B cell (primary cell): ENCODE measurements at regions of chr5 and their contacts with region 1.

Region 1: GRCh38 chr5:138035605-138036537 is 3.0 kb upstream of the FAM13B start:
- DNase-seq: peak; percentile 86
- ATAC-seq: peak; percentile 35
- H3K4me3 ChIP-seq: no peak overlapping the region
- H3K4me3 Mint-ChIP-seq: peak overlapping the region; percentile 4
- H3K27ac ChIP-seq: no peak overlapping the region
- H3K27ac Mint-ChIP-seq: no peak overlapping the region
- H3K4me1 ChIP-seq: peaks cover 19 to 26% of the 10 kb centered on the region in 2 donors
- H3K4me1 Mint-ChIP-seq: peaks cover 32% of the 10 kb centered on the region
- H3K27me3 ChIP-seq: no peaks in the 10 kb centered on the region
- H3K27me3 Mint-ChIP-seq: no peaks in the 10 kb centered on the region
- CTCF ChIP-seq: peak; percentile 97

Region 2: GRCh38 chr5:137754126-137754960 is 281.5 kb before region 1 on chr5 and contains the start of gene HNRNPA0:
- CTCF ChIA-PET with region 1: interaction called, 5 read pairs
- POLR2A ChIA-PET with region 1: no interaction called
- intact Hi-C with region 1: loop called (anchors 1 kb)
- DNase-seq: peak; percentile 99
- ATAC-seq: peak; percentile 82
- H3K4me3 ChIP-seq: peak within 1 kb of the TSS; percentile 69 to 95 (median 87)
- H3K4me3 Mint-ChIP-seq: peak within 1 kb of the TSS; percentile 97
- H3K27ac ChIP-seq: peak within 1 kb of the TSS; percentile 98 to 100
- H3K27ac Mint-ChIP-seq: peak within 1 kb of the TSS; percentile 100
- H3K4me1 ChIP-seq: peaks cover 27 to 28% of the 10 kb centered on the region in 2 donors
- H3K4me1 Mint-ChIP-seq: peaks cover 32% of the 10 kb centered on the region
- H3K27me3 ChIP-seq: no peaks in the 10 kb centered on the region
- H3K27me3 Mint-ChIP-seq: no peaks in the 10 kb centered on the region
- CTCF ChIP-seq: no peak
- total RNA-seq, gene HNRNPA0: 29.6 and 31.5 TPM in 2 replicates

Region 3: GRCh38 chr5:138024117-138024516 is 11.8 kb before region 1 on chr5:
- CTCF ChIA-PET with region 1: interaction called, 18 read pairs
- POLR2A ChIA-PET with region 1: interaction called, 3 read pairs
- intact Hi-C with region 1: no loop called
- DNase-seq: no peak
- ATAC-seq: no peak
- H3K4me3 ChIP-seq: no peak overlapping the region
- H3K4me3 Mint-ChIP-seq: no peak overlapping the region
- H3K27ac ChIP-seq: no peak overlapping the region
- H3K27ac Mint-ChIP-seq: no peak overlapping the region
- H3K4me1 ChIP-seq: peaks cover 46 to 62% of the 10 kb centered on the region in 2 donors
- H3K4me1 Mint-ChIP-seq: peaks cover 74% of the 10 kb centered on the region
- H3K27me3 ChIP-seq: no peaks in the 10 kb centered on the region
- H3K27me3 Mint-ChIP-seq: no peaks in the 10 kb centered on the region
- CTCF ChIP-seq: no peak

Region 4: DNA sequence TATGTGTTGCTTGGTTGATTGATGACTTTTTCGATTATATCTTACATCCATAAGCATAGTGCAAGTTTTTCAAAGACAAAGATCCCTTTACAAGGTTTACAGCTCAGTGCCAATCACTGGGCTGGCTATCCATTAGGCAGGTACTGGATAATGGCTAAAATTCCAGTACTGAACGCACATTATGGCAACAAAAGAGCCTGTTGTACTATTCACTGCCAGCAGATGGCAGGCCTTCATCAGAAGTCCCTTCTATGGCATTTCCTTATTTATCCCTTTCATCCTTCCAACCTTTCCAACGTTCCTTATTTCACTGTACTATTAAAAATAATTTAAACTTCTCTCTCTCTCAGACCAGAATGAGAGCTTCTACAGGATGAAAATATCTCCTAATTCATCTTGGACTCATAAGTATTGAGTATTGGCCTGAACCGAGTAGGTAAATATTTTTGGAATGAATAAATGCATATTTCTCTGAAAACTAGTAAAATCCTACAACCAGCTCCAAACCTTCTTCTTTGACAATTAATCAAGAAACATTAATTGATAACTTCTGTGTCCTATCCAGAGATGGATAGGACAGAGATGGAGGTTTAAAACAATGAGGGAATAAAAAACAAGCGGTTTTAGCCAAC is 41.3 kb after region 1 on chr5:
- CTCF ChIA-PET with region 1: interaction called, 13 read pairs
- POLR2A ChIA-PET with region 1: no interaction called
- intact Hi-C with region 1: no loop called
- DNase-seq: peak; percentile 71
- ATAC-seq: peak; percentile 53
- H3K4me3 ChIP-seq: no peak overlapping the region
- H3K4me3 Mint-ChIP-seq: no peak overlapping the region
- H3K27ac ChIP-seq: no peak overlapping the region
- H3K27ac Mint-ChIP-seq: no peak overlapping the region
- H3K4me1 ChIP-seq: peaks cover 3 to 15% of the 10 kb centered on the region in 2 donors
- H3K4me1 Mint-ChIP-seq: peaks cover 10% of the 10 kb centered on the region
- H3K27me3 ChIP-seq: no peaks in the 10 kb centered on the region
- H3K27me3 Mint-ChIP-seq: no peaks in the 10 kb centered on the region
- CTCF ChIP-seq: peak; percentile 99

Region 5: DNA sequence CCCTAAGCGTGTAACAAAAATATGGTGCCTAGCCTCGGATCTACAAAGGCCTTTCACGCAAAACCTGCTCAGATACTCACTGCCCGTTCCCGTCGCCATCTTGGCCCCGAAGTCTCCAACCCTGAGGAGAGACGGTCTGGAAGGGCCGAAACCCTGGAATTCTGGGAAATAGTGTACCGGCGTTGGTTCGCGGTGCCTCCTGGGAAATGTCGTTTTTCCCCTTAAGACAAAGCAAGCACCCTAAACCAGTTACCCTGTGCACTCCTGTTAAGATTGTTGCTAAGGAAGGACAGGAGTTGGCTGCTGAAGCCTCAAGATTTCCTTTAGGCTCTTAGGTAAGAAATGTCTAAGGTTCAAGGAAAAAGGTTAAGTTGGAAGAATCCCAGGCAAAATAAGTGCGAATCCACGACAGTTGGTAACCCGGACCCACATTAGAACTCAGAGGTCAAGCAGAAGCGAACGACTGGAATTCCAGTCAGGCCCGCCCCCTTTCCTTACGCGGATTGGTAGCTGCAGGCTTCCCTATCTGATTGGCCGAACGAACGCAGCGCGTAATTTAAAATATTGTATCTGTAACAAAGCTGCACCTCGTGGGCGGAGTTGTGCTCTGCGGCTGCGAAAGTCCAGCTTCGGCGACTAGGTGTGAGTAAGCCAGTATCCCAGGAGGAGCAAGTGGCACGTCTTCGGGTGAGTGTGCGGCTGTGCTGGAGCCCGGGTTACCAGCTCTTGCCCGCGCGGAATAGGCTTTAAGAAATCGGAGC is 142.8 kb after region 1 on chr5 and contains the starts of genes BRD8 and KIF20A:
- CTCF ChIA-PET with region 1: interaction called, 3 read pairs
- POLR2A ChIA-PET with region 1: no interaction called
- intact Hi-C with region 1: loop called (anchors 2 kb)
- DNase-seq: peak; percentile 93
- ATAC-seq: peak; percentile 93
- H3K4me3 ChIP-seq: peak within 1 kb of the TSS; percentile 73 to 99 (median 87)
- H3K4me3 Mint-ChIP-seq: peak within 1 kb of the TSS; percentile 76
- H3K27ac ChIP-seq: peak within 1 kb of the TSS; percentile 37 to 76
- H3K27ac Mint-ChIP-seq: peak within 1 kb of the TSS; percentile 32
- H3K4me1 ChIP-seq: peaks cover 11 to 18% of the 10 kb centered on the region in 2 donors
- H3K4me1 Mint-ChIP-seq: peaks cover 9% of the 10 kb centered on the region
- H3K27me3 ChIP-seq: no peaks in the 10 kb centered on the region
- H3K27me3 Mint-ChIP-seq: no peaks in the 10 kb centered on the region
- CTCF ChIP-seq: no peak
- total RNA-seq, gene BRD8: 98.9 and 114 TPM in 2 replicates
- total RNA-seq, gene KIF20A: 0.47 TPM in 1 of 2 replicates, not detected in the other

Region 6: GRCh38 chr5:138331449-138332368 is 295.8 kb after region 1 on chr5 and contains the start of gene CDC25C:
- CTCF ChIA-PET with region 1: no interaction called
- POLR2A ChIA-PET with region 1: no interaction called
- intact Hi-C with region 1: loop called (anchors 2 kb)
- DNase-seq: peak; percentile 97
- ATAC-seq: peak; percentile 100
- H3K4me3 ChIP-seq: peak within 1 kb of the TSS; percentile 60 to 75 (median 72)
- H3K4me3 Mint-ChIP-seq: peak within 1 kb of the TSS; percentile 87
- H3K27ac ChIP-seq: peak within 1 kb of the TSS in 1 of 2 donors; percentile 23
- H3K27ac Mint-ChIP-seq: peak within 1 kb of the TSS; percentile 61
- H3K4me1 ChIP-seq: peaks cover 7 to 15% of the 10 kb centered on the region in 2 donors
- H3K4me1 Mint-ChIP-seq: peaks cover 14% of the 10 kb centered on the region
- H3K27me3 ChIP-seq: no peaks in the 10 kb centered on the region
- H3K27me3 Mint-ChIP-seq: no peaks in the 10 kb centered on the region
- CTCF ChIP-seq: no peak
- total RNA-seq, gene CDC25C: not detected in 2 replicates

Region 7: GRCh38 chr5:138542956-138543729 is 507.3 kb after region 1 on chr5 and contains the start of gene ETF1:
- CTCF ChIA-PET with region 1: no interaction called
- POLR2A ChIA-PET with region 1: no interaction called
- intact Hi-C with region 1: loop called (anchors 2 kb)
- DNase-seq: peak; percentile 100
- ATAC-seq: peak; percentile 91
- H3K4me3 ChIP-seq: peak within 1 kb of the TSS; percentile 92 to 99 (median 95)
- H3K4me3 Mint-ChIP-seq: peak within 1 kb of the TSS; percentile 94
- H3K27ac ChIP-seq: peak within 1 kb of the TSS; percentile 100
- H3K27ac Mint-ChIP-seq: peak within 1 kb of the TSS; percentile 100
- H3K4me1 ChIP-seq: peaks cover 33 to 46% of the 10 kb centered on the region in 2 donors
- H3K4me1 Mint-ChIP-seq: peaks cover 74% of the 10 kb centered on the region
- H3K27me3 ChIP-seq: no peaks in the 10 kb centered on the region
- H3K27me3 Mint-ChIP-seq: no peaks in the 10 kb centered on the region
- CTCF ChIP-seq: no peak
- total RNA-seq, gene ETF1: 50.5 and 50.8 TPM in 2 replicates